ENCODE measurements at regions of chr3 and their contacts with region 1.

Region 1: GRCh38 chr3:12695112-12695511 is 31.2 kb upstream of the RAF1 start:
- DNase-seq: no peak
- H3K4me3 Mint-ChIP-seq: no peak overlapping the region
- H3K27ac Mint-ChIP-seq: no peak overlapping the region
- H3K4me1 Mint-ChIP-seq: no peaks in the 10 kb centered on the region
- H3K27me3 Mint-ChIP-seq: peaks cover 4% of the 10 kb centered on the region

Region 2: GRCh38 chr3:12706504-12707253 is 11.6 kb after region 1 on chr3:
- CTCF ChIA-PET with region 1: interaction called, 12 read pairs
- DNase-seq: peak; percentile 73
- H3K4me3 Mint-ChIP-seq: no peak overlapping the region
- H3K27ac Mint-ChIP-seq: no peak overlapping the region
- H3K4me1 Mint-ChIP-seq: no peaks in the 10 kb centered on the region
- H3K27me3 Mint-ChIP-seq: peaks cover 37% of the 10 kb centered on the region